ENCODE measurements at regions of chr7 and their contacts with region 1.

Region 1: DNA sequence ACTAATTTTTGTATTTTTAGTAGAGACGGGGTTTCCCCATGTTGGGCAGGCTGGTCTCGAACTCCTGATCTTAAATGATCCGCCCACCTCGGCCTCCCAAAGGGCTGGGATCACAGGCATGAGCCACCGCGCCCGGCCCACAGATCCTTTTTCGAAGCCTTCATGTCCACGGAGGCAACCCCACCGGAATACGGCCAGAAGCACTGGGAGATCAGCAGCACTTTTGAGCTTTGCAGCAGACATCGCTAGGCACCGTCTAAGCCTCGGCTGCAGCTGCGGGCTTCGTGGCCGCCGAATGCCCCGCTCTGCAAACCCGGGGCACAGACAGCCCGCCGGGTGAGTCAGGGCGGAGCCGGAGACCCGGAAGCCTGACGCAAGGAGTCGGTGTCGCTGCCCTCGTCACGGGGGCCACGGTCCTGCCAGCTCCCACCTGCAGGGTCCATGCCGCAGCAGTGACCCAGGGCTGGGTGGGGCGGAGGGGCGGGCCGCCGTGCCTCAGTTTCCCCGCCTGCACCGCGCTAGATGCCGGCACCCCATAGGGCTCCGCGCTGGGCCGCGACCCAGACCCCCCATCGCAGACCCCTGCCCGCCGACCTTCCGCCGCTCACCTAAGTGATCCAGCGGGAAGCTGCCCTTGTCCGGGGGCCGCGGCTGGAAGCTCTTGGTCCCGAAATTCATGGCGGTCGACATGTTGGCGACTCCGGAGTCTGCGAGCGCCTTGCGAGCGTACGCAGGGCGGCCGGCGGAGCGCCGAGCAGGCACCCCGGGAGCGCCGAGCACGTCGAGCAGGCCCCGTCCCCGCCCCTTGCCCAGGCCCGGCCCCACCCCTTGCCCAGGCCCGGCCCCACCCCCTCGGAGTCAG is at the start of gene COX19:
- DNase-seq: peak; percentile 78
- H3K4me3 Mint-ChIP-seq: peak within 1 kb of the TSS; percentile 87
- H3K27ac Mint-ChIP-seq: peak within 1 kb of the TSS; percentile 79
- H3K4me1 Mint-ChIP-seq: no peaks in the 10 kb centered on the region
- H3K27me3 Mint-ChIP-seq: no peaks in the 10 kb centered on the region
- CTCF ChIP-seq: no peak
- total RNA-seq, gene COX19: 14.7 and 16.5 TPM in 2 replicates

Region 2: DNA sequence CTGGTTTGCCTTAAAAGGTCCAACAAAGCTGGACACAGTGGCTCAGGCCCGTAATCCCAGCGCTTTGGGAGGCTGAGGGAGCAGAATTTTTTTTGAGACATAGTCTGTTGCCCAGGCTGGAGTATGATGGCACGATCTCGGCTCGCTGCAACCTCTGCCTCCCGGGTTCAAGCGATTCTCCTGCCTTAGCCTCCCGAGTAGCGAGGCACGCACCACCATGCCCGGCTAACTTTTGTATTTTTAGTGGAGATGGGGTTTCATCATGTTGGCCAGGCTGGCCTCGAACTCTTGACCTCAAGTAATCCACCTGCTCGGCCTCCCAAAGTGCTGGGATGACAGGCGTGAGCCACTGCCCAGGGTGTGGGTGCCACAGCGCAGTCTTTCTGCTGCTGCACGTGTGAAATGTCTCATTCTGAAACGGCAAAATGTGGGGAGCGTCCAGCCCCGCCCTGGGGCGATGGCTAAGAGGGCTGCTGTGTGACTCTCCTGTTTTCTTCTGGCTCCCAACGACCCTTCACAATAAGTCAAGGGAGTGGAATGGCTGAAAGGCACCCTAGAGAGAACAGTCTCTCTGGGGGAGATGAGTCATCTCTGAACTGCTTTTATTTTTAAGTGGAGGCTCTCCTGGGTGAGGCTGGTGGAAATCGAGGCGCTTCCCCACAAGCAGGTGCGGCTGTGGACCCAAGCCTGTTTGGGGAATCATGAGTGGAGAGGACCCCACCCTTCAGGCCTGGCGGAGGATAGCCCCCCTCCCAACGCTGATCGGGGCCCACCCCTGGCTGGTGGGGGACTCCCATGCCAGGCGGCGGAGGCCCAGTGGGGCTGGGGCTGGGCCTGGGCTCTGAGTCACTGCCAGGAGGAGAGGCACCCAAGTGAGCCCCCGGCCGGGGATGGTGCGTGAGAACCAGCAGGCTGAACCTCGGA is 38.7 kb before region 1 on chr7:
- CTCF ChIA-PET with region 1: no interaction called
- POLR2A ChIA-PET with region 1: no interaction called
- intact Hi-C with region 1: loop called (anchors 2 kb)
- DNase-seq: peak; percentile 83
- H3K4me3 Mint-ChIP-seq: no peak overlapping the region
- H3K27ac Mint-ChIP-seq: no peak overlapping the region
- H3K4me1 Mint-ChIP-seq: no peaks in the 10 kb centered on the region
- H3K27me3 Mint-ChIP-seq: peaks cover 9% of the 10 kb centered on the region
- CTCF ChIP-seq: no peak

Region 3: GRCh38 chr7:945556-946255 is 29.3 kb before region 1 on chr7:
- CTCF ChIA-PET with region 1: interaction called, 8 read pairs
- POLR2A ChIA-PET with region 1: interaction called, 15 read pairs
- intact Hi-C with region 1: no loop called
- DNase-seq: peak; percentile 95
- H3K4me3 Mint-ChIP-seq: no peak overlapping the region
- H3K27ac Mint-ChIP-seq: peak overlapping the region; percentile 59
- H3K4me1 Mint-ChIP-seq: peaks cover 5% of the 10 kb centered on the region
- H3K27me3 Mint-ChIP-seq: peaks cover 19% of the 10 kb centered on the region
- CTCF ChIP-seq: no peak

Region 4: DNA sequence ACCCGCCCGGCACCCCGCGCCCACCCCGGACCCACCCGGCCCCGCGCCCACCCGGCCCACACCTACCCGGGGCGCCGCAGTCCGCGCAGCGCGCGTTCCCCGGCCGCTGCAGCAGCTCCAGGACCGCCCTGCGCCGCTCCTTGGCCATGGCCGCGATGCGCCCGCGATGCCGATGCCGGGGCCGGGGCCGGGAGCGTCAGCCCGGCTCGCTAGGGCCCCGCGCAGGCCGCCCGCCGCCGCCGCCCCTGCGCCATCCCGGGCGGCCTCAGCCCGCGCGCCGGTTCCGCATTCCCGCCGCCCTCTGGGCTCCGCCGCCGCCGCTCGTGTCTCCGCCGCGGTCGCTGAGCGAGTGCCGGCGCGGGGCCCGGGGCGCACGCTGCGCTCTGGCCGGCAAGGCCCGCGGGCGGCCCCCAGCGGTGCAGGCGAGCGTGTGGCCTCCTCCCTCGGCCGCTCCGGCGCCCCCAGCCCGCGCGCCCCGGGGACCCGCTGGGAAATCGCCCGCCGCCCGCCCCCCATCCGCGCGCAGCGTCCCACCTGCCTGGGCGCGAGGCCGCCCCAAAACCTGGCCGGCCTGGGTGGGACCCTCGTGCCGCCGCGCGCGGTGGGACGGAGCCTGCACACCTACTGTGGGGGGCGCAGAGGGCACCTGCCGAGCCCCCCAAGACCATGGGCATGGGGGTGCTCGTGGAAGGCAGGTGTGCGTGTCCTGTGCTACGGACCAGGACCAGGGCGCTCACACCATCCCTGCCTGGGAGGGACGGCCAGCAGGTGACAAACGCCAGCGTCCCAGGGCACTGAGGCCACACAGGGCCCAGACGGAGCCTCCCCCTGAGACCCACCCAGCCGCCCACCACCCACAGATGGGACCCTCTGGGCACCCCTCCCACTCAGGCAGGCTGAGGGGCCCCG is 20.5 kb before region 1 on chr7 and contains the start of gene ADAP1:
- CTCF ChIA-PET with region 1: interaction called, 8 read pairs
- POLR2A ChIA-PET with region 1: interaction called, 11 read pairs
- intact Hi-C with region 1: no loop called
- DNase-seq: peak; percentile 49
- H3K4me3 Mint-ChIP-seq: peak within 1 kb of the TSS; percentile 63
- H3K27ac Mint-ChIP-seq: no peak within 1 kb of the TSS
- H3K4me1 Mint-ChIP-seq: no peaks in the 10 kb centered on the region
- H3K27me3 Mint-ChIP-seq: no peaks in the 10 kb centered on the region
- CTCF ChIP-seq: no peak
- total RNA-seq, gene ADAP1: 7.0 and 10.5 TPM in 2 replicates

Region 5: GRCh38 chr7:1024331-1024841 is 49.3 kb after region 1 on chr7:
- CTCF ChIA-PET with region 1: no interaction called
- POLR2A ChIA-PET with region 1: no interaction called
- intact Hi-C with region 1: no loop called
- DNase-seq: no peak
- H3K4me3 Mint-ChIP-seq: no peak overlapping the region
- H3K27ac Mint-ChIP-seq: no peak overlapping the region
- H3K4me1 Mint-ChIP-seq: peaks cover 13% of the 10 kb centered on the region
- H3K27me3 Mint-ChIP-seq: no peaks in the 10 kb centered on the region
- CTCF ChIP-seq: no peak

Region 6: DNA sequence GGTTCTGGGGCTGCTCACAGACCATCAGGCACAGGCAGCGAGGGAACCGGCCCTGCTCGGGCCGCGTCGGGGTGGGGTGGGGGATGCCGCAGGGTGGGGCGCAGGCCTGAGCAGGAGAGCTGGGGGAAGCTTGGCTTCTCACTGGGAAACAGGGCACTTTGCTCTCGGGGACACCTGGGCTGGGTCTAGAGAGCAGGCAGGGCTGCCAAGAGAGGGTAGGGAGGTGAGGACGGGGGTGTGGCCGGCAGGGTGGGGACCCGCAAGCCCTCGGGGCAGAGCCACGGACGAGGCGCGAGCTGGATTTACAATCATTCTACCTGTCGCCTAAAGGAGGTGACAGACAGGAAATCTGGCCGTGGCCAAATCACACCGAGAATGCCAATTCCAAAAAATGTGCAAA is 518.1 kb after region 1 on chr7:
- CTCF ChIA-PET with region 1: no interaction called
- POLR2A ChIA-PET with region 1: no interaction called
- intact Hi-C with region 1: no loop called
- DNase-seq: no peak
- H3K4me3 Mint-ChIP-seq: no peak overlapping the region
- H3K27ac Mint-ChIP-seq: no peak overlapping the region
- H3K4me1 Mint-ChIP-seq: no peaks in the 10 kb centered on the region
- H3K27me3 Mint-ChIP-seq: no peaks in the 10 kb centered on the region
- CTCF ChIP-seq: no peak

Measured in MCF 10A (cell line).